HCT116 (cell line): ENCODE measurements at regions of chr5 and their contacts with region 1.

Region 1: GRCh38 chr5:66987949-66988838 is 208.4 kb downstream of the CD180 start:
- DNase-seq: no peak
- ATAC-seq: peak; percentile 70; the same call in 1 of the 2 replicates
- H3K4me3 ChIP-seq: no peak overlapping the region
- H3K27ac ChIP-seq: no peak overlapping the region
- H3K4me1 ChIP-seq: no peaks in the 10 kb centered on the region
- H3K27me3 ChIP-seq: peaks cover 50% of the 10 kb centered on the region
- CTCF ChIP-seq: peak; percentile 26 to 84 (median 75); a peak in 5 of 6 replicates
- POLR2A ChIP-seq: no peak
- RAD21 ChIP-seq: peak; percentile 38; the same call in 1 of the 2 replicates

Region 2: DNA sequence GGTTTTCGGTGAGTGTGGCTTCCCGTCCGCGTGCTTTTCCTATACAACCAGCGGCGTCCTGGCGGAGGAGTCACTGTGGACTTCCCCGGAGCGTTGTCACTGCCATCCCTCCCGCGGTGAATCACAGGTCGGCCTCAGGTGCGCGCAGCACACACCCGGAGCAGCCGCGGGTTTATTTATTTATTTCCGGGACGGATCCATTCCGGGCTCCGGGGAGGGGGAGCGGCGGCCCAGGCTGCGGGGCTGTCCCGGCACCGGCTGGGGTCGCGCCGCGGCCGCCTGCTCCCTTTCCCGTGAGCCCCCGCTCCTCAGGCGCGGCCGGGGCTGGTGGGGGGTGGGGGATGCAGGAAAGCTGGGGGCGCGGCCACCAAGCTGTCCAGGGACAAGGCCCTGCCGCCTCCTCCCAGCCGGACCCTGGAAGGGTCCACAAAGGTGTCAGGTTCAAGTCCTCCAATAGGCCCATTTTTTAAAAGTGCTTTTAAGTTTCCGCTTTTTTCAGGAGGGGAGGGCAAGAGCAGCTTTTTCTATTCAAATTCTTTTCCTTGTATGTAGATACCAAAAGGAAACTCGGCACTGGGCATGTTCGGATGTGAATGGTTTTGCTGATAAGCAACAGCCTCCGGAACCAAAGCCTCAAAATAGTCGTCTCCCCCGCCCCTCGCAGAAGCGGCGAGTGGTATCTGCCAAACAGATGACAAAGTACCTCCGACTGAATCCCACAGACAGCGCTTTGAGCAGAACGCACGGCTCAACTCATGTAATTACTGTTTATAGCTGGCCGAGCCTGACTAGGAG is 15.9 kb after region 1 on chr5:
- CTCF ChIA-PET with region 1: no interaction called
- POLR2A ChIA-PET with region 1: interaction called, 5 read pairs
- RAD21 ChIA-PET with region 1: no interaction called
- intact Hi-C with region 1: loop called (anchors 1 kb)
- DNase-seq: peak; percentile 53
- ATAC-seq: peak; percentile 90
- H3K4me3 ChIP-seq: peak overlapping the region; percentile 36 to 53
- H3K27ac ChIP-seq: peak overlapping the region; percentile 50
- H3K4me1 ChIP-seq: peaks cover 4 to 17% of the 10 kb centered on the region in 2 experiments
- H3K27me3 ChIP-seq: peaks cover 56% of the 10 kb centered on the region
- CTCF ChIP-seq: no peak
- POLR2A ChIP-seq: no peak
- RAD21 ChIP-seq: no peak